Endothelial cell of umbilical vein (primary cell): ENCODE measurements at regions of chr10 and their contacts with region 1.

Region 1: GRCh38 chr10:62050893-62051433 is 149.5 kb downstream of the ARID5B start:
- DNase-seq: peak; percentile 88
- H3K4me3 ChIP-seq: peak overlapping the region in 2 of 3 experiments; percentile 36 to 60
- H3K27ac ChIP-seq: peak overlapping the region; percentile 63
- H3K4me1 ChIP-seq: peaks cover 46% of the 10 kb centered on the region
- H3K27me3 ChIP-seq: no peaks in the 10 kb centered on the region
- CTCF ChIP-seq: no peak
- POLR2A ChIP-seq: no peak

Region 2: DNA sequence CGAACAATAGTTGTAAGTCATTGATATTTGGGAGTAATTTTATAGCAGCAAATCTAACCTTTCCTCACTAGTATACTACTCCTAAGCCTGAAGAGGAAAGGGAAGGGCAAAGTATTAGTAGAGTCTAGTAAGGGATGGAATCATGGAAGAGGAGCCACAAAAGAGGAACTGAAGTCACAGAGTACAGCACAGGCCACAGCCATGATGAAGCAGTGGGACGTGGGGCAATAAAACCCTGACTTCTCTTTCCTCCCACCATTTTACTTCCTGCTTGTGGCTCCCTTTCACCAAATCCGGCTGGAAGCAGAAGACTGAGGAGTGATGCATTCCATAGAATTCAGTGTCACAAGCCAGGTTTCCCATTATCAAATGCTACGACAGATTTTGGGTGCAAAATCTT is 329.5 kb before region 1 on chr10:
- CTCF ChIA-PET with region 1: no interaction called
- POLR2A ChIA-PET with region 1: no interaction called
- dilution Hi-C with region 1: no loop called
- intact Hi-C with region 1: no loop called
- DNase-seq: no peak
- H3K4me3 ChIP-seq: no peak overlapping the region
- H3K27ac ChIP-seq: no peak overlapping the region
- H3K4me1 ChIP-seq: no peaks in the 10 kb centered on the region
- H3K27me3 ChIP-seq: no peaks in the 10 kb centered on the region
- CTCF ChIP-seq: no peak
- POLR2A ChIP-seq: no peak

Region 3: DNA sequence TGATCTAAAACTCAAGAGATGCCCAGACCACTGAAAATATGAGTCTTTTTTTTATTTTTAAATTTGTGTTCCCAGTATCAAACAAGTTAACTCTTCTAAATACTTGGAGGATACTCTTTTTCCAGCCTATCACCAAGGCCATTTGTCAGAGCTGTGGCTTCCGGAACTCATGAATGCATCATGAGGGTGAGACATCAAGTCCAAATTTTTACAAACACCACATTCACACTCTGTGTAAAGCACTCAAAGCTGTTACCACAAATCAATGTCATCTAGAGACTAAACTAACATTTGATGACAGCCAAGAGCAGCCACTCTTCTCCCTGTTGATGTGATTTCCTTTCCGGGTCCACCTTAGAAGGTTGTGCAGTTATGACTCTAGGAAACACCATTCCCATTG is 193.2 kb before region 1 on chr10:
- CTCF ChIA-PET with region 1: no interaction called
- POLR2A ChIA-PET with region 1: no interaction called
- dilution Hi-C with region 1: no loop called
- intact Hi-C with region 1: no loop called
- DNase-seq: no peak
- H3K4me3 ChIP-seq: no peak overlapping the region
- H3K27ac ChIP-seq: no peak overlapping the region
- H3K4me1 ChIP-seq: no peaks in the 10 kb centered on the region
- H3K27me3 ChIP-seq: no peaks in the 10 kb centered on the region
- CTCF ChIP-seq: no peak
- POLR2A ChIP-seq: no peak

Region 4: GRCh38 chr10:62171791-62172190 is 120.8 kb after region 1 on chr10:
- CTCF ChIA-PET with region 1: no interaction called
- POLR2A ChIA-PET with region 1: no interaction called
- dilution Hi-C with region 1: no loop called
- intact Hi-C with region 1: loop called (anchors 5 kb)
- DNase-seq: peak; percentile 80
- H3K4me3 ChIP-seq: no peak overlapping the region
- H3K27ac ChIP-seq: no peak overlapping the region
- H3K4me1 ChIP-seq: no peaks in the 10 kb centered on the region
- H3K27me3 ChIP-seq: no peaks in the 10 kb centered on the region
- CTCF ChIP-seq: no peak
- POLR2A ChIP-seq: no peak

Region 5: DNA sequence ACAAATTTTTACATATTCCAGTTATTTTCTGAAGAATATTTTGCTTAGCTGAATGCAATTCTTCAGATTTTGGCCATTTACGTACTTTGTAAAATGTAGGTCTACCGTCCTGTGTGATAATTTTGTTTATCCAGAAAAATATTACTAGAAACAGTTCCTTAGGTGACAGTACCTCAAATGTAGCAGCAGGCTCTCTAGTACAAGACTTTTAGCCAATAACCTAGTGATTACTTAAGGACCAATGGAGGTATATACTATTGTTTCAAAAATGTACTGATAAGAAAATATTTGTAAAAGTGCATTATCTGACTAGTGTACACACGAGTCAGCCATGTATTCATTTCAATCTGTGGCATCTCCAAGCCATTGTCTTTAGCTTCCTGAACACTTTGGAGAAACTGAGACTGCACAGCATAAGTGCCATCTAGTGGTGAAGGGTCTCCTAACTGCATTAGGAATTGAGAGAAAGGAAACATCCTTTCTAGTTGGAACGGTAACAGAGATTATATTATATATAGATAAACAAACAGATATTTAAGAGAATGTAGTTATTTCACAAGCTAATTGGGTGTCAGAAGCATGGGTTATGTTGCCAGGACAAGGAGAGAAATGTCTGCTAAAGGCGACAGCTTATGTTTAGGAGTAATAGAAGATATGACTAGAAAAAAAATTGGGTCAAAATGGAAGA is 194.0 kb after region 1 on chr10:
- CTCF ChIA-PET with region 1: interaction called, 468 read pairs
- POLR2A ChIA-PET with region 1: interaction called, 4 read pairs
- dilution Hi-C with region 1: no loop called
- intact Hi-C with region 1: no loop called
- DNase-seq: peak; percentile 86
- H3K4me3 ChIP-seq: no peak overlapping the region
- H3K27ac ChIP-seq: no peak overlapping the region
- H3K4me1 ChIP-seq: peaks cover 17% of the 10 kb centered on the region
- H3K27me3 ChIP-seq: no peaks in the 10 kb centered on the region
- CTCF ChIP-seq: peak; percentile 63 to 71
- POLR2A ChIP-seq: no peak

Region 6: GRCh38 chr10:62384057-62384446 is 333.1 kb after region 1 on chr10:
- CTCF ChIA-PET with region 1: no interaction called
- POLR2A ChIA-PET with region 1: no interaction called
- dilution Hi-C with region 1: no loop called
- intact Hi-C with region 1: loop called (anchors 5 kb)
- DNase-seq: peak; percentile 31
- H3K4me3 ChIP-seq: peak overlapping the region in 1 of 3 experiments; percentile 48
- H3K27ac ChIP-seq: peak overlapping the region; percentile 95
- H3K4me1 ChIP-seq: peaks cover 53% of the 10 kb centered on the region
- H3K27me3 ChIP-seq: no peaks in the 10 kb centered on the region
- CTCF ChIP-seq: no peak
- POLR2A ChIP-seq: no peak